Cardiac septum (tissue), 1 donor: ENCODE measurements at regions of chr2 and their contacts with region 1.

Region 1: GRCh38 chr2:186589612-186590349 is at the start of gene ITGAV:
- DNase-seq: peak; percentile 97
- total RNA-seq, gene ITGAV: 234 TPM

Region 2: DNA sequence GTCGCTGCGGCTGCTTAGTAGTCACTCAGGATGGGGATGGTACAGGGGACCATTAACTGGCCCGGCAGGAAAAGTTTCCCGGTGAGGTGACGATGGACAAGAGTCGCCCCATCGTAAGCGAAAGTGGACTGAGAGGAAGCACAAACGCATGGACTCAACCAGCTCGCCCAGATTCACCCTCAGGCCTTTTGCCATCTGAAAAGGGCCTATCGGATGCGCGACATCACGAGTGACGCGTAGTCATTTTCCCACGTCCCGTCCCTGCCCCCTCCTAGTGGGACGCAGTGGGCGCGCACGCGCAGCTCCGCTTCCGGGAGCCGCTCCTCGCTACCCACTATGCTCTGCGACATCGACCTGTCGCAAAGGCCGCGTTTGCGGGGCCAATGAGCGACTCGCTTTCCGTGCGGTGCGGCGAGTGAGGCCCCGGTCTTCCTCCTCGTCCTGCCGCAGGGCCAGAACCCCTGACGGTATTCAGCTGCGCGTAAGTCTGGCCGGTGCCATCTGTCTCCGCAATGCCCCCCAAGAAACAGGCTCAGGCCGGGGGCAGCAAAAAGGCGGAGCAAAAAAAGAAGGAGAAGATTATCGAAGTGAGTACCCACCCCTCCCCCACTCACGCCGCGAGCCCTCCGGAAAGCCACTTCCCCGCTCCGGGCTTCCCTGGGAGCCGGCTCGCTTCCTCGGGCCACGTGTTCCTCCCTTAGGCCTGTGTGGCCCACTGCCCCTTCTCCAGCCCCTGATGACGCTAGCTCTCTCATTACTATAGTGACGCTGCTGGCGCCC is 103.7 kb before region 1 on chr2 and contains the start of gene ZC3H15:
- intact Hi-C with region 1: loop called (anchors 5 kb)
- DNase-seq: peak; percentile 98
- total RNA-seq, gene ZC3H15: 36.8 TPM

Region 3: DNA sequence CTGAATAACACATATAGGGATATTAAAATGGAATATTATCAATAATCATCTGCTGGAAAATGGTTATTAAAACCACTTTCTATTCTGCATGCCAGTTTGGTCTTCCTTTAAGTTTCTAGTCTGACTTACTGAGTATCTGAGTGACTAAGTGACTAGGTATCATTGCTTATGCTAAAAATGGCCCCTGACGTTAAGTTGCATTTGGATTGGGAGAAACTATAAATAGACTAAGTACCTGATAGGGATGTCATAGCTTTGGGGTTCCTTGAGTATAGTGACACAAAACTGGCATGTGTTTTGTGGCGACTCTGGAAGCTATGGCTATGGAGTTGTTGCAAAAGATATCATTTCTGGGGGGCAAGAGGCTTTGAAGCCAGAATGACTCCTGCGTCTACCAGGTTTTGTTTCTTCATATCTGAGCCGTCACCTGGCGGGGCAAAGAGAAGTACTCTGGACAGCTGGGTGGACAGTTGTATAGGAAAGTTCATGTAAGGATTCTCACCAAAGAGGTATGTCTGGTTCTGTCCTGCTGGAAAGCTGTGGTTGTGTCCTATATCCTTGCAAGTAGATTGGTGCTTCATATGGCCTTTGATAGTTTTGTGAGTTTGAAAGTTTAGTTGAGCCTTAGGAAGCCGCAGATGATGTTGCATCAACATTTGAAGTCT is 18.0 kb after region 1 on chr2:
- intact Hi-C with region 1: loop called (anchors 2 kb)
- DNase-seq: no peak

Region 4: GRCh38 chr2:186629250-186629996 is 39.6 kb after region 1 on chr2:
- intact Hi-C with region 1: loop called (anchors 5 kb)
- DNase-seq: no peak

Region 5: DNA sequence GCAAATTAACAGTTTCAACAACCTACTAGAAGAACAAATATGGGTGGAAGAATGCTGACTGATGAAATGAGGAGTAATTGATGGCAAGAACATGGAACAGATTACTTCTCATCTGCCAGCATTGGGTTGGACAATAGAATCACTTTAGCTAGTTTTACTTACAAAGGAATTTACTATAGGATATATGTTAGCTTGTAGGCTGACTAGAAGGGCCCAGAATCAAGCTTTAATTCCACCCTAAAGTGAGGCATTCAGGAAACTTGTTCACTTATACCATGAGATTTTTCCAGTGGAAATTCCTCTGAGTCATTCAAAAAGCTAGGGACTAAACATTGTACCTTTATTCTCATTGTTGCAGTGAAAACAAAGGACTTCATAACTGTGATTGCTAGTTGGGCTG is 264.2 kb after region 1 on chr2:
- intact Hi-C with region 1: no loop called
- DNase-seq: no peak

Region 6: DNA sequence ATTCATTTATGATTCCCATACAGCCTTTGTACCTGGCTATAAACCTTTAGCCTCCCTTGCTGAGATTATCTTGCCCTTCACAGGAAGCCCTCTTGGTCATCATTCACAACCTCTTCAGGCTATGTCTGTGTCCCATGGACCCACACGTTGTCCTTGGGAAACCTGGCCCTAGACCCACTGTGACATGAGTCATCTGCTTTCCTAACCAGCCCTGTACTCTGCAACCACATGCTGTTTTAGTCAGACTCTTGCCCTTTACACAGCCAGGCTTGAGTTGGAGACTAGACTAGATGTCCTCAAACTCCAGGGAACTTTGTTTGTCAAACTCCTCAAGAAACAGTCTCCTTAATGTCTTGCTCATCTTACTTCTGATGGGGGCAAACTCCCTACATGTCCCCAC is 488.5 kb after region 1 on chr2:
- intact Hi-C with region 1: no loop called
- DNase-seq: no peak